ENCODE measurements at regions of chr14 and their contacts with region 1.

Region 1: GRCh38 chr14:90399541-90400444 is 3.0 kb downstream of the CALM1 start:
- DNase-seq: peak; percentile 87 to 95 (median 92)
- ATAC-seq: peak; percentile 78
- H3K4me3 ChIP-seq: peak overlapping the region; percentile 95 to 99
- H3K27ac ChIP-seq: peak overlapping the region; percentile 89 to 96
- H3K4me1 ChIP-seq: peaks cover 25 to 57% of the 10 kb centered on the region in 2 donors
- H3K27me3 ChIP-seq: no peaks in the 10 kb centered on the region
- CTCF ChIP-seq: peak; percentile 96 to 100

Region 2: DNA sequence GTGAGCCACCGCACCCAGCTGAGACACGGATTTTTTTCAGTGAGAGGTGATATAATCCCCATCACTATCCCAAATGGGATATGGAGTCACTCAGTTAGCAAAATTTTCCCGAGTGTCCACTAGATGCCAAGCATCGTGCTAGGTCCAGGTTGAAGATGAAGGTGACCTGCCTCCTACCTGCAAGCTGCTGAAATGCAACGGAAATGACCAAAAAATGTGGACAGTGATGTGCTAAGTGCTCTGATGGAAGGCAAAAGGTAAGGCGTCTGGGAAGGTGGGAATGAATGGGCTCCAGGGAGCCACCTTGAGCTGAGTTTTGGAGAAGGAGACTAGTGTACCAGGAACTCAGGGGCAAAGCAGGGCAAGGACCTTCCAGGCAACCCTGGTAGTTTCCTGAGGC is 61.6 kb after region 1 on chr14:
- intact Hi-C with region 1: no loop called
- DNase-seq: no peak
- ATAC-seq: no peak
- H3K4me3 ChIP-seq: no peak overlapping the region
- H3K27ac ChIP-seq: no peak overlapping the region
- H3K4me1 ChIP-seq: no peaks in the 10 kb centered on the region
- H3K27me3 ChIP-seq: no peaks in the 10 kb centered on the region
- CTCF ChIP-seq: no peak

Region 3: GRCh38 chr14:90518941-90519256 is 119.1 kb after region 1 on chr14:
- intact Hi-C with region 1: loop called in 1 of 2 experiments (anchors 10 kb)
- DNase-seq: no peak
- ATAC-seq: peak; percentile 17
- H3K4me3 ChIP-seq: no peak overlapping the region
- H3K27ac ChIP-seq: no peak overlapping the region
- H3K4me1 ChIP-seq: peaks cover 3 to 16% of the 10 kb centered on the region in 2 donors
- H3K27me3 ChIP-seq: no peaks in the 10 kb centered on the region
- CTCF ChIP-seq: peak in 1 of 2 donors; percentile 50

Measured in left lung (tissue), 14 donors.